CD8-positive, alpha-beta T cell (primary cell): ENCODE measurements at regions of chr15 and their contacts with region 1.

Region 1: GRCh38 chr15:81807186-81807585 is 238.6 kb downstream of the MEX3B start:
- DNase-seq: no peak
- ATAC-seq: no peak
- H3K4me3 ChIP-seq: no peak overlapping the region
- H3K4me3 Mint-ChIP-seq: no peak overlapping the region
- H3K27ac ChIP-seq: no peak overlapping the region
- H3K27ac Mint-ChIP-seq: no peak overlapping the region
- H3K4me1 ChIP-seq: no peaks in the 10 kb centered on the region
- H3K4me1 Mint-ChIP-seq: no peaks in the 10 kb centered on the region
- H3K27me3 ChIP-seq: peaks cover 0 to 2% of the 10 kb centered on the region in 2 experiments
- H3K27me3 Mint-ChIP-seq: no peaks in the 10 kb centered on the region
- CTCF ChIP-seq: no peak

Region 2: DNA sequence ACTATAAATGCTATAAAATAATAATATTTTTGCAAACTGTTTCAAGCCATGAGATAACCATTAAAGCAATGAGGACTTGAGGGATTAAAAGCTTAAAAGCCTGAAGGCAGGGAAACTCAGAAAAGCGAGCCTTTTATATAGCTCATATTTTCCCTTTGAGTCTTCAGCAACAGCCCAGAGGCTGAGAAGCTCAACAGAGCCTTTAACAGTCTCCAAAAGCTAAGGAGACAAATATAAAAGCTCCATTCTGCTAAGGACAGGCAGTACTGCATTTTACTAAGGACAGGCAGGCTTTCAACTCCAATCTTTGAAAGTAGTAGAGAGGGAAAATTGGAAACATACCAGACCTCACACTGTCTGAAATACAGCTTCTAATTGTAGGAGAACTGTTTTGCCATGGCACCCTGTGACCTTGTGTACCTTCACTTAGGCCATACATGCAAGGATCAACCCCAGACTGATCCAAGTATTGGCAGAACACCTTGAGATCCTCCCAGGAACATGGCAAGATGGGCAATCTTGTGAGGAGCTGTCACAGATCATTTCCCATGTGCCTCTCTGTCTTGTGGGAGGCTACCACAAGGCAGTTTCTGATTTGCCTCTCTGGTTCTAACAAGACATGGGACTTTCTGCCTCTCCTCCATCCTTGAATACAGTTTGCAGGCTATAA is 1456.1 kb before region 1 on chr15:
- CTCF ChIA-PET with region 1: no interaction called
- POLR2A ChIA-PET with region 1: no interaction called
- intact Hi-C with region 1: no loop called
- DNase-seq: no peak
- ATAC-seq: no peak
- H3K4me3 ChIP-seq: no peak overlapping the region
- H3K4me3 Mint-ChIP-seq: no peak overlapping the region
- H3K27ac ChIP-seq: no peak overlapping the region
- H3K27ac Mint-ChIP-seq: no peak overlapping the region
- H3K4me1 ChIP-seq: no peaks in the 10 kb centered on the region
- H3K4me1 Mint-ChIP-seq: no peaks in the 10 kb centered on the region
- H3K27me3 ChIP-seq: peaks cover 0 to 6% of the 10 kb centered on the region in 2 experiments
- H3K27me3 Mint-ChIP-seq: peaks cover 22% of the 10 kb centered on the region
- CTCF ChIP-seq: no peak

Region 3: DNA sequence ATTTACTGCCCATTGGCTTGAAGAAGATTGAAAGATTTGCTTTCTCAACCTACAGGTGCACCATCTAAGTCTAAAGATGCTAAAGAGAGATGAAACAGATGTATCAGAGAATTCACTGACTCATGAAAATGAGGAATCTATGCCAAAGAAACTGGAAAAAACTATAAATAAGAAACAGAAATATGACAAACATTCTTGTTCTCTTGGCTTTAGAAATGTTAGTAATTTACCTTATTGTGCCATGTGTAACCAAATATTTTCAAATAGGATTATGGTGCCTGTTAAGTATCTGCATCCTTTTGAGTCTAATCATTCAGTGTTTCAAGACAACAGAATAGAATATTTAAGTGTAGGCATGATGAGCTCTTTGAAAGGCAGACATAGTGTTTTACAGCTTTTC is 32.9 kb before region 1 on chr15:
- CTCF ChIA-PET with region 1: no interaction called
- POLR2A ChIA-PET with region 1: no interaction called
- intact Hi-C with region 1: loop called in 1 of 2 experiments (anchors 1 kb)
- DNase-seq: no peak
- ATAC-seq: no peak
- H3K4me3 ChIP-seq: no peak overlapping the region
- H3K4me3 Mint-ChIP-seq: no peak overlapping the region
- H3K27ac ChIP-seq: no peak overlapping the region
- H3K27ac Mint-ChIP-seq: no peak overlapping the region
- H3K4me1 ChIP-seq: no peaks in the 10 kb centered on the region
- H3K4me1 Mint-ChIP-seq: peaks cover 6% of the 10 kb centered on the region
- H3K27me3 ChIP-seq: no peaks in the 10 kb centered on the region
- H3K27me3 Mint-ChIP-seq: no peaks in the 10 kb centered on the region
- CTCF ChIP-seq: no peak

Region 4: DNA sequence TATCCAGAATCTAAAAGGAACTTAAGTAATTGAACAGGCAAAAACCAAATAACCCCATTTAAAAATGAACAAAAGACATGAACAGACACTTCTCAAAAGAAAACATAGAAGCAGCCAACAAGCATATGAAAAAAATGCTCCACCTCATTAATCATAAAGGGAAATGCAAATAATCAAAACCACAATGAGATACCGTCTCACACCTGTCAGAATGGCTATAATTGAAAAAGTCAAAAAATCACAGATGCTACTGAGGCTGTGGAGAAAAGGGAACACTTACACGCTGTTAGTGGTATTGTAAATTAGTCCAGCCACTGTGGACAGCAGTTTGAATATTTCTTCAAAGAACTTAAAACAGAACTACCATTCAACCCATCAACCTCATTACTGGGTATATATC is 17.9 kb after region 1 on chr15:
- CTCF ChIA-PET with region 1: no interaction called
- POLR2A ChIA-PET with region 1: no interaction called
- intact Hi-C with region 1: no loop called
- DNase-seq: no peak
- ATAC-seq: no peak
- H3K4me3 ChIP-seq: no peak overlapping the region
- H3K4me3 Mint-ChIP-seq: no peak overlapping the region
- H3K27ac ChIP-seq: no peak overlapping the region
- H3K27ac Mint-ChIP-seq: no peak overlapping the region
- H3K4me1 ChIP-seq: no peaks in the 10 kb centered on the region
- H3K4me1 Mint-ChIP-seq: no peaks in the 10 kb centered on the region
- H3K27me3 ChIP-seq: no peaks in the 10 kb centered on the region
- H3K27me3 Mint-ChIP-seq: peaks cover 3% of the 10 kb centered on the region
- CTCF ChIP-seq: no peak